ENCODE measurements at regions of chr11 and their contacts with region 1.

Region 1: GRCh38 chr11:108008656-108009496 is at the start of gene CUL5:
- DNase-seq: peak; percentile 90
- H3K4me3 Mint-ChIP-seq: peak within 1 kb of the TSS; percentile 86
- H3K27ac Mint-ChIP-seq: peak within 1 kb of the TSS; percentile 98
- H3K4me1 Mint-ChIP-seq: peaks cover 17% of the 10 kb centered on the region
- H3K27me3 Mint-ChIP-seq: no peaks in the 10 kb centered on the region
- CTCF ChIP-seq: peak; percentile 84
- total RNA-seq, gene CUL5: 31.8 and 37.5 TPM in 2 replicates

Region 2: GRCh38 chr11:108025387-108026080 is 16.7 kb after region 1 on chr11:
- CTCF ChIA-PET with region 1: interaction called, 10 read pairs
- POLR2A ChIA-PET with region 1: interaction called, 8 read pairs
- intact Hi-C with region 1: no loop called
- DNase-seq: no peak
- H3K4me3 Mint-ChIP-seq: no peak overlapping the region
- H3K27ac Mint-ChIP-seq: no peak overlapping the region
- H3K4me1 Mint-ChIP-seq: peaks cover 14% of the 10 kb centered on the region
- H3K27me3 Mint-ChIP-seq: no peaks in the 10 kb centered on the region
- CTCF ChIP-seq: no peak

Region 3: GRCh38 chr11:108037636-108038035 is 28.8 kb after region 1 on chr11:
- CTCF ChIA-PET with region 1: interaction called, 5 read pairs
- POLR2A ChIA-PET with region 1: interaction called, 10 read pairs
- intact Hi-C with region 1: no loop called
- DNase-seq: no peak
- H3K4me3 Mint-ChIP-seq: no peak overlapping the region
- H3K27ac Mint-ChIP-seq: no peak overlapping the region
- H3K4me1 Mint-ChIP-seq: no peaks in the 10 kb centered on the region
- H3K27me3 Mint-ChIP-seq: no peaks in the 10 kb centered on the region
- CTCF ChIP-seq: no peak

Measured in MCF 10A (cell line).